ENCODE measurements at regions of chr1 and their contacts with region 1.

Region 1: DNA sequence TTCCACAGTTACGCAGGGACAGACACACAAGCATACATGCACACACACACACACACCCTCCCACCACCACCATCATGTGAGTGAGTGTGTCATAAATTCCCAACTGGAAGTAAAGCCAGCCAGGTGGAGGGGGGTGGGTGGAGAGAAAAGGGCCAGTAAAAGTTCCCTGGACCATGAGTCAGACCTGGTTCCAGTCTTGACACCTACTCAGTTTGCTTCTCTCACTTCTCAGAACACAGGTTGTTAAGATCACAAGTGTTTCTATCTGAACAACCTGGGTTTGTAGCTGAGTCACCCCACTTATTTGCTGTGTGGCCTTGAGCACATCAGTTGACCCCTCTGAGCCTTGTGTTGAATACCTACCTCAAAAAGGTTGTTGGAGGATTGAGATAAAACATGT is 9.6 kb downstream of the EPHA10 start:
- DNase-seq: peak; percentile 70
- ATAC-seq: peak; percentile 93
- H3K4me3 Mint-ChIP-seq: no peak overlapping the region
- H3K27ac Mint-ChIP-seq: no peak overlapping the region
- H3K4me1 Mint-ChIP-seq: peaks cover 18% of the 10 kb centered on the region
- H3K27me3 Mint-ChIP-seq: peaks cover 33% of the 10 kb centered on the region

Region 2: GRCh38 chr1:36207339-36207738 is 1548.0 kb before region 1 on chr1:
- CTCF ChIA-PET with region 1: no interaction called
- POLR2A ChIA-PET with region 1: no interaction called
- intact Hi-C with region 1: no loop called
- DNase-seq: no peak
- ATAC-seq: no peak
- H3K4me3 Mint-ChIP-seq: no peak overlapping the region
- H3K27ac Mint-ChIP-seq: peak overlapping the region; percentile 53
- H3K4me1 Mint-ChIP-seq: peaks cover 13% of the 10 kb centered on the region
- H3K27me3 Mint-ChIP-seq: peaks cover 1% of the 10 kb centered on the region

Region 3: GRCh38 chr1:37574834-37575480 is 180.3 kb before region 1 on chr1:
- CTCF ChIA-PET with region 1: no interaction called
- POLR2A ChIA-PET with region 1: no interaction called
- intact Hi-C with region 1: loop called in 1 of 2 experiments (anchors 5 kb)
- DNase-seq: peak; percentile 26
- ATAC-seq: peak; percentile 56
- H3K4me3 Mint-ChIP-seq: no peak overlapping the region
- H3K27ac Mint-ChIP-seq: peak overlapping the region; percentile 90
- H3K4me1 Mint-ChIP-seq: peaks cover 55% of the 10 kb centered on the region
- H3K27me3 Mint-ChIP-seq: no peaks in the 10 kb centered on the region

Region 4: DNA sequence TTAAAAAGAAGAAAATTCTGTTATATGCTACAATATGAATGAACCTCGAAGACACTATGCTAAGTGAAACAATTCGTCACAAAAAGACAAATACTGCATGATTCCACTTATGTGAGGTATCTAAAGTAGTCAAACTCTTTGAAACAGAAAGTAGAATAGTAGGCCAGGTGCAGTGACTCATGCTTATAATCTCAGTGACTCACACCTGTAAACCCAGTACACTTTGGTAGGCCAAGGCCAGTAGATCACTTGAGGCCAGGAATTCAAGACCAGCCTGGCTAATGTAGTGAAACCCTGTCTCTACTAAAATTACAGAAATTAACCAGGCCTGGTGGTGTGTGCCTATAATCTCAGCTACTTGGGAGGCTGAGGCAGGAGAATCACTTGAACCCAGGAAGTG is 16.1 kb before region 1 on chr1:
- CTCF ChIA-PET with region 1: interaction called, 3 read pairs
- POLR2A ChIA-PET with region 1: no interaction called
- intact Hi-C with region 1: loop called in 1 of 2 experiments (anchors 2 kb)
- DNase-seq: peak; percentile 24
- ATAC-seq: peak; percentile 100
- H3K4me3 Mint-ChIP-seq: no peak overlapping the region
- H3K27ac Mint-ChIP-seq: no peak overlapping the region
- H3K4me1 Mint-ChIP-seq: peaks cover 4% of the 10 kb centered on the region
- H3K27me3 Mint-ChIP-seq: peaks cover 39% of the 10 kb centered on the region

Region 5: GRCh38 chr1:37793773-37794371 is 38.6 kb after region 1 on chr1 and contains the start of gene MANEAL:
- CTCF ChIA-PET with region 1: interaction called, 4 read pairs
- POLR2A ChIA-PET with region 1: no interaction called
- intact Hi-C with region 1: loop called in 1 of 2 experiments (anchors 5 kb)
- DNase-seq: peak; percentile 59
- ATAC-seq: peak; percentile 80
- H3K4me3 Mint-ChIP-seq: peak within 1 kb of the TSS; percentile 60
- H3K27ac Mint-ChIP-seq: no peak within 1 kb of the TSS
- H3K4me1 Mint-ChIP-seq: peaks cover 14% of the 10 kb centered on the region
- H3K27me3 Mint-ChIP-seq: peaks cover 24% of the 10 kb centered on the region
- total RNA-seq, gene MANEAL: 1.0 TPM